ENCODE measurements at regions of chr11 and their contacts with region 1.

Region 1: DNA sequence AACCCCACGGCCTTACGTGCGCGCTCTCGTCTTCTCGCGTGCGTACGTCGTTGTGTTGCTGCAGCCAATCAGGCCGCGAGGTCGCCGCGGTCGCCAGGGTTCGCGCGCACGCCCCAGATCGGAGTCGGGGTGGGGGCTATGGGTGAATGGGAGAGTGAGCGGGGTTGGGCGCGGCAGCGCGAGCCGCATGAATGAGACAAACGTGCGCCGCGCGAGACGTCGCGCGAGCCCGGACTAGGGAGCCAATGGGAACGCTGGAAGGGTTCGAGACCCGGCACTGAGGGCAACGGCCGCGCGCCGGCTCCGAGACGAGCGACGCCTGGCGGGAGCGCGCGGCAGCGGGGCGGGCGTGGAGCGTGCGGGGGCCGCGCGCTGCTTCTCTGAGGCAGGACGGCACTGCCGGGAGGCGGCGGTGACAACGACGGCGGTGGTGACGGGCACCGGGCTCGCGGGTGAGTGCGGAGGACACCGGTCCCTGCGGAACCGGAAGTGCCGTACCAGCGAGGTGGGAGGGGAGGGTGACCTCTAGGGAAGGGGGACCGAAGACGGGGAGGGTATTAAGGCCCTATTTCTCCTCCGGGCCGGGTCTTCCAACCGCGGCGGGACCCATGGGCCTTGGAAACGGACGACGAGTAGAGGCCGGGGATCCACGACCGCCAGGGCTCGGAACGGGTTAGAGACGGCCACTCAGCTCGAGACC is at the start of gene ZDHHC5:
- DNase-seq: peak; percentile 99 to 100
- ATAC-seq: peak; percentile 79 to 95 (median 82)
- H3K4me3 ChIP-seq: peak within 1 kb of the TSS; percentile 97
- H3K4me3 Mint-ChIP-seq: peak within 1 kb of the TSS; percentile 97
- H3K27ac ChIP-seq: peak within 1 kb of the TSS; percentile 95
- H3K27ac Mint-ChIP-seq: peak within 1 kb of the TSS; percentile 97 to 98
- H3K4me1 ChIP-seq: peaks cover 19% of the 10 kb centered on the region
- H3K4me1 Mint-ChIP-seq: peaks cover 44 to 58% of the 10 kb centered on the region in 2 donors
- H3K27me3 ChIP-seq: no peaks in the 10 kb centered on the region
- H3K27me3 Mint-ChIP-seq: no peaks in the 10 kb centered on the region
- CTCF ChIP-seq: peak; percentile 53
- total RNA-seq, gene ZDHHC5: 46.1 to 64.0 (median 55.5) TPM

Region 2: DNA sequence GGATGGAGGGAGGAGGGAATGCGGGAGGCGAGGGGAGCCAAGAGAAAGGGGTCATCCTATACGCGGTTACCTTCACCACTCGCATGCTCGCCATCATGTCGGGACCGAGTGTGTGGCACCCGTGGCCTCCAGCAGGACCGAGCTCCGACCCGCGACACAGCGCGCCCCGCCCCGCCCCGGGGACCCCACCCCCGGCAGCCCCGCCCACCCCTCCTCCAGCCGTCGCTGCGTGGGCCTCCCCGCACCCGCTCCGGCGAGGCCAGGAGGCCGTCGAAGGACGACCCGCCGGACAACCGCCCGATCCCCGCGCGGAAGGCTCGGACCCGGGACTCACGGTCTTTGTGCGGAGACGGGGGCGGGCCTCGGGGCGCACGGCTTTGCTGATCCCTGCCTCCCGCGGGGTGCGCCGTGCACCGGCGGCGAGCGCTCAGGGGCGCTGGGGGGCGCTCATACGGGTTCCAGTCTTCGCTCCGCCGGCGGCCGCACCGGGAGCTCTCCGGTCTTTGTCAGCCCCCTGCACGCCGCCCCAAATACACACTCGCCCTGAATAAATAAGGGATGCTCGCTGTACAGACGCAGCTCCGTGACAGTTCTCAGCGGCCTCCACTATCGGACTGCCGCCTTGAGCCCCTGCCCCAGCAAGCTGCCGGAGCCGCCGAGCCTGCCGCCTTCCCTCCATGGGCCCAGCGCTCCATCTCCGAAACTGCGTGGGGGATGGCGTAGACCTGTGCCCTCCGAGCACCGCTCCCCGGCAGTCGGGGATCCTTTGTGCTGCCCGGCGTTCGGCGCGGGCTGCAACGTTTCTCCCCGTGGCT is 100.2 kb before region 1 on chr11 and contains the start of gene UBE2L6:
- intact Hi-C with region 1: loop called (anchors 1 kb)
- DNase-seq: peak; percentile 56 to 95
- ATAC-seq: peak; percentile 76 to 91 (median 78)
- H3K4me3 ChIP-seq: peak within 1 kb of the TSS; percentile 99
- H3K4me3 Mint-ChIP-seq: peak within 1 kb of the TSS; percentile 99
- H3K27ac ChIP-seq: peak within 1 kb of the TSS; percentile 95
- H3K27ac Mint-ChIP-seq: peak within 1 kb of the TSS; percentile 96 to 99
- H3K4me1 ChIP-seq: peaks cover 24% of the 10 kb centered on the region
- H3K4me1 Mint-ChIP-seq: peaks cover 40 to 50% of the 10 kb centered on the region in 2 donors
- H3K27me3 ChIP-seq: no peaks in the 10 kb centered on the region
- H3K27me3 Mint-ChIP-seq: no peaks in the 10 kb centered on the region
- CTCF ChIP-seq: peak; percentile 93
- total RNA-seq, gene UBE2L6: 89.1 to 108 (median 103) TPM

Region 3: DNA sequence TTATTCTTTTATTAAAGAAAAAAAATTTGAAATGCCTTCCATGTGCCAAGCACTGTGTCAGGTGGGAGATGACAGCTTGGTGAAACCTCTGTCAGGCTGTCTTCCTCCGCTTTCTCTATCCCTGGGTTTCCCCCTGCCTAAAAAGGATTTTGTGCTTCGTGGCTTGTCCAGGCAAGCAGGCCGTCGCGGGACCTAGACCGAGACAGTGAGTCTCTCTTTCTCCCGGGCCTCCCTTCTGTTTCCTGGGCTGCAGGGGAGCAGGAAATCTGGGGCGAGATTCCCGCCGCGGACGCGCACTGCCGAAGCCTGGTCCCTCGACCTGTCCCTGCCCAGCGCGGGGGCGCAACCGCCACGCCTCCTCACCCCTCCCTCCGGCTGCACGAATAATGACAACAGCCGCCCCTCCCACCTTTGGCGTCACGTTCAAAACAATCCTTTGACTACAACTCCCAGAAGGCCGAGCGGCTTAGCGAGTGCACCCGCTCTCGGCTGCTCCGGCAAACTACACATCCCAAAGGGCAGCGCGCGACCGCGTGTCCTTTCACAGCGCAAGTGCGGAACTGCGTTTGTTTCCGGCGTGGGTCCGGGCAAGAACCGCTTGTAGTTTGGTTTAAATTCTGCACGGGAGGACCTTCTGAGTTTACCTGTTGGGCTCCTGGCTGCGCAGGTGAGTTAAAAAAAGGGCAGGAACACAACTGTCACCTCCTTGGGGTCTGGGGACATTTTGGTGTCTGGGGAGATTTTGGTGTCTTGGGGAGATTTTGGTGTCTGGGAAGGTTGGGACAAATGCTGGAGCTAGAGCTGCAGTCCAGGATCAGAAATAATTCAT is 10.5 kb before region 1 on chr11 and contains the start of gene CLP1:
- intact Hi-C with region 1: loop called (anchors 1 kb)
- DNase-seq: peak; percentile 97 to 99
- ATAC-seq: peak; percentile 95 to 100 (median 98)
- H3K4me3 ChIP-seq: peak within 1 kb of the TSS; percentile 86
- H3K4me3 Mint-ChIP-seq: peak within 1 kb of the TSS; percentile 100
- H3K27ac ChIP-seq: peak within 1 kb of the TSS; percentile 90
- H3K27ac Mint-ChIP-seq: peak within 1 kb of the TSS; percentile 96 to 99
- H3K4me1 ChIP-seq: peaks cover 12% of the 10 kb centered on the region
- H3K4me1 Mint-ChIP-seq: peaks cover 27 to 29% of the 10 kb centered on the region in 2 donors
- H3K27me3 ChIP-seq: no peaks in the 10 kb centered on the region
- H3K27me3 Mint-ChIP-seq: no peaks in the 10 kb centered on the region
- CTCF ChIP-seq: no peak
- total RNA-seq, gene CLP1: 18.5 to 23.1 (median 22.8) TPM

Region 4: GRCh38 chr11:57741132-57742086 is 73.5 kb after region 1 on chr11 and contains the start of gene SELENOH:
- intact Hi-C with region 1: loop called (anchors 1 kb)
- DNase-seq: peak; percentile 81 to 96
- ATAC-seq: peak; percentile 84 to 91 (median 86)
- H3K4me3 ChIP-seq: peak within 1 kb of the TSS; percentile 94
- H3K4me3 Mint-ChIP-seq: peak within 1 kb of the TSS; percentile 99
- H3K27ac ChIP-seq: peak within 1 kb of the TSS; percentile 97
- H3K27ac Mint-ChIP-seq: peak within 1 kb of the TSS; percentile 99
- H3K4me1 ChIP-seq: peaks cover 17% of the 10 kb centered on the region
- H3K4me1 Mint-ChIP-seq: peaks cover 18 to 30% of the 10 kb centered on the region in 2 donors
- H3K27me3 ChIP-seq: no peaks in the 10 kb centered on the region
- H3K27me3 Mint-ChIP-seq: no peaks in the 10 kb centered on the region
- CTCF ChIP-seq: no peak
- total RNA-seq, gene SELENOH: 55.3 to 83.3 (median 61.0) TPM

Measured in natural killer cell (primary cell).